ENCODE measurements at regions of chr4 and their contacts with region 1.

Region 1: DNA sequence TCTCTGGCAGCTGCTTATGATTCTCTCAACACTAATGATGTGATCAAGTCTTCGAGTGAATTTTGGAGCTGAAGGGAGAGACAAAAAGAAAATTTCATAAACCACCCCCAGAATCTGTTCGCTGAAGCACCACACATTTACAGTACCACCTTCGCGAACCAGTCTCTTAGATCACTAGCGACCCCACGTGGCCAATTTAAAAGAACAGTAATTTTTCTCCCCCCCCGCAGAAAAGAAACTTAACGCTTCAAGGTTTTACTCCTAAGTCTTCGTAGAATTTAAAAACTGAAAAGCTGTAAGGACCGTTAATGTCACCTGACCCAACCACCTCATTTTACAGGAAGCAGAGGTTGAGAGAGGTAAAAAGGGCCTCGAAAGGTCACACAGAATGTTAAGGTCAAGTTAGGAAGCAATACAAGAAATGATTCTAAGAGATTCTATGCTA is 187.5 kb downstream of the QDPR start:
- DNase-seq: no peak
- H3K4me3 ChIP-seq: no peak overlapping the region
- H3K27ac ChIP-seq: peak overlapping the region; percentile 7
- H3K4me1 ChIP-seq: peaks cover 22% of the 10 kb centered on the region
- H3K27me3 ChIP-seq: no peaks in the 10 kb centered on the region
- CTCF ChIP-seq: peak in 1 of 3 experiments; percentile 71
- POLR2A ChIP-seq: no peak

Region 2: GRCh38 chr4:16289897-16290554 is 1034.4 kb before region 1 on chr4:
- intact Hi-C with region 1: loop called (anchors 10 kb)
- DNase-seq: no peak
- H3K4me3 ChIP-seq: no peak overlapping the region
- H3K27ac ChIP-seq: no peak overlapping the region
- H3K4me1 ChIP-seq: peaks cover 6% of the 10 kb centered on the region
- H3K27me3 ChIP-seq: no peaks in the 10 kb centered on the region
- CTCF ChIP-seq: peak; percentile 7 to 72 (median 65)
- POLR2A ChIP-seq: no peak

Region 3: GRCh38 chr4:16516796-16517439 is 807.5 kb before region 1 on chr4:
- intact Hi-C with region 1: loop called (anchors 5 kb)
- DNase-seq: no peak
- H3K4me3 ChIP-seq: no peak overlapping the region
- H3K27ac ChIP-seq: no peak overlapping the region
- H3K4me1 ChIP-seq: no peaks in the 10 kb centered on the region
- H3K27me3 ChIP-seq: no peaks in the 10 kb centered on the region
- CTCF ChIP-seq: no peak
- POLR2A ChIP-seq: no peak

Region 4: DNA sequence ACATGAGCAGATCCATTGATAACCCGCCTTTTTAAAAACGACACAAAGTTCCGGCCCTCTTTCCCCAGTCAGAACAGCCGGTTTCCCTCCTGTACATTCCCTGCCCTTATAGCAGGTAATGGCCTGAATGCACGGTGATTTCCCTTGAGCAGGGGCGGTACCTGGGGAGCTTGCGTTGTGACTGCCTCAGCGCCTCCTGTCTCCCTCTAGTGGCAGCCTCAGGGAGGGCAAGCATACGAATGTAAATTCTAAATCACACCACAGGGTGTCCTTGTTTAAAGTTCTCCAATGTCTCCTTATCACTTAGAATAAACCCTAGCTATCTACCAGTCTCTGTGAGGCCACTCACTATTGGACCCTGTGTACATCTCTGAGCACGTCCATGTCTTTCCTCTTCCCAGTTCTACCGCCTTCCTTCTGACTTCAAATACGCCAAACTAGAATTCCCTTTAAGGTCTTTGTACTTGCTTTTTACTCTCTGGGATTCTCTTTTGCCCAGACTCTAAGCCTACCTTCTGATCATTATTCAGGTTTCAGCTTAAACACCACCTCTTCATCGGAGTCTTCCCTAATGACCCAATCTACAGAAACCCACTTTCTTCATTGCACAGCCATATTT is 407.6 kb before region 1 on chr4:
- intact Hi-C with region 1: loop called (anchors 10 kb)
- DNase-seq: no peak
- H3K4me3 ChIP-seq: no peak overlapping the region
- H3K27ac ChIP-seq: no peak overlapping the region
- H3K4me1 ChIP-seq: no peaks in the 10 kb centered on the region
- H3K27me3 ChIP-seq: no peaks in the 10 kb centered on the region
- CTCF ChIP-seq: peak in 2 of 3 experiments; percentile 16 to 58
- POLR2A ChIP-seq: no peak